Common myeloid progenitor, CD34-positive (primary cell): ENCODE measurements at regions of chr3 and their contacts with region 1.

Region 1: GRCh38 chr3:195001961-195002861 is 268.7 kb downstream of the XXYLT1 start:
- DNase-seq: peak; percentile 64 to 83 (median 79)
- H3K4me3 ChIP-seq: peak overlapping the region in 1 of 7 experiments; percentile 20
- H3K27ac ChIP-seq: no peak overlapping the region
- H3K4me1 ChIP-seq: peaks cover 7 to 38% (median 25%) of the 10 kb centered on the region in 4 experiments
- H3K27me3 ChIP-seq: no peaks in the 10 kb centered on the region

Region 2: GRCh38 chr3:195015021-195015420 is 12.8 kb after region 1 on chr3:
- CTCF ChIA-PET with region 1: interaction called, 37 read pairs
- POLR2A ChIA-PET with region 1: no interaction called
- DNase-seq: peak; percentile 47 to 72 (median 57)
- H3K4me3 ChIP-seq: no peak overlapping the region
- H3K27ac ChIP-seq: no peak overlapping the region
- H3K4me1 ChIP-seq: peaks cover 0 to 21% (median 11%) of the 10 kb centered on the region in 4 experiments
- H3K27me3 ChIP-seq: peaks cover 0 to 4% (median 0%) of the 10 kb centered on the region in 5 experiments

Region 3: DNA sequence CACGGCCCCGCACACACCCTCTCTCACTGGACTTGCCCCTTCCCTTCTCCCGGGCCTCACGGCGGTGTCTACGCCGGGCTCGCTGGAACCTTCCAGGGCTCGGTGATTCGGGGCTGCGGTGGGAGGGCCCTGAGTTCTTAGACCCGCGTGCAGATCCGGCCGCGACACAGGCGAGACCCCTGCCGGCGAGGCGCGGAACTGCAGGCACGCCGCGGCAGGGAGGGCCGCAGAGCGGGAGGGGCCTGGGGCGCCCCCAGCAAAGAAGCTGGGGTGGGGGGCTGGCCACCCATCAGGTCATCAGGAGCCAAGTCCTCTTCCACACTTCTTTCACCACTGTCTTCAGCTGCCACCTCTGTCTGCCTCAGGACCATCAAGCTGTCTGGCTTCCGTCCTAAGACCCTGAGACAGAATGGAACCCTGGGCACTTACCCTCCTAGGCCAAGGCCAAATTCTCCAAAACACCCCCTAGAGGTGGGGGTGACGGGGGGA is 104.3 kb after region 1 on chr3:
- CTCF ChIA-PET with region 1: interaction called, 35 read pairs
- POLR2A ChIA-PET with region 1: no interaction called
- DNase-seq: peak in 2 of 3 donors; percentile 71 to 75
- H3K4me3 ChIP-seq: peak overlapping the region in 3 of 7 experiments; percentile 9 to 58 (median 43)
- H3K27ac ChIP-seq: no peak overlapping the region
- H3K4me1 ChIP-seq: peaks cover 0 to 45% (median 33%) of the 10 kb centered on the region in 4 experiments
- H3K27me3 ChIP-seq: no peaks in the 10 kb centered on the region

Region 4: DNA sequence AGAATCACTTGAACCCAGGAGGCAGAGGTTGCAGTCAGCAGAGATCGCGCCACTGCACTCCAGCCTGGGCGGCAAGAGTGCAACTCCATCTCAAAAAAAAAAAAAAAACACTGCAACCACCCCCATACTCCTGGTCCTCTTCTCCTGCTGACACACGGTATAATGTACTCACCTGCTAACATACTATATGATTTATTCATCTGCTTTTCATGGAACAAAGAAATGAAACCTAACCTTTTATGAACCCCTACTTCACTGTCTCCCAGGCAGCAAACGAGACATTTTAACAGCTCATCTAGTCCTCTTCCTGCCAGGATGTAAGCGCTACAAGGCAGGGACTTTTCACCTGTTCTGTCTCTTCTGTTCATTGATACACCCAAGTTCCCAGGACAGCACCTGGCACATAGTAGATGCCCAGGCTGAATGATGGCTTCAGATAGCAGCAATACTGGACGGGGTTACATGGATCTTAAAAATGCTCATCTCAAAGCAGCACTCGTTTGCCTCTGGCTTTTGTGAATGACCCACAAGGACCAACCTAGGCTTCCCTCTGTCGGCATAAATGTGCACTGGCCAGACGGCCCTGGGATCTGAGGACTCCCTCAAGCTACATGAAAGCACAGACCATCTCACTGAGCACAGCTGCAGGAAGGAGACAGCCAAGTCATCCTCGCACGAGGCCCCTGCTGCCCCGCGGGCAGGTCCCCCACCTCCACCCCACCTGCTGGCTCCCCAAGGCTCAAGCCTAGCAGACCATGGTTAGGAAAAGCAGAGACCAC is 248.5 kb after region 1 on chr3:
- CTCF ChIA-PET with region 1: interaction called, 18 read pairs
- POLR2A ChIA-PET with region 1: interaction called, 5 read pairs
- DNase-seq: peak; percentile 74 to 85 (median 83)
- H3K4me3 ChIP-seq: peak overlapping the region in 3 of 7 experiments; percentile 16 to 57 (median 20)
- H3K27ac ChIP-seq: no peak overlapping the region
- H3K4me1 ChIP-seq: peaks cover 4 to 35% (median 25%) of the 10 kb centered on the region in 4 experiments
- H3K27me3 ChIP-seq: no peaks in the 10 kb centered on the region